Natural killer cell (primary cell): ENCODE measurements at regions of chr3 and their contacts with region 1.

Region 1: GRCh38 chr3:151838583-151839312 is 24.8 kb downstream of the AADAC start:
- DNase-seq: peak in 1 of 2 donors; percentile 67
- ATAC-seq: peak; percentile 70 to 84 (median 76)
- H3K4me3 ChIP-seq: no peak overlapping the region
- H3K4me3 Mint-ChIP-seq: no peak overlapping the region
- H3K27ac ChIP-seq: no peak overlapping the region
- H3K27ac Mint-ChIP-seq: no peak overlapping the region
- H3K4me1 ChIP-seq: peaks cover 3% of the 10 kb centered on the region
- H3K4me1 Mint-ChIP-seq: no peaks in the 10 kb centered on the region
- H3K27me3 ChIP-seq: no peaks in the 10 kb centered on the region
- H3K27me3 Mint-ChIP-seq: peaks cover 15 to 23% of the 10 kb centered on the region in 2 donors
- CTCF ChIP-seq: peak; percentile 79

Region 2: GRCh38 chr3:151156618-151157216 is 682.0 kb before region 1 on chr3:
- intact Hi-C with region 1: loop called (anchors 5 kb)
- DNase-seq: peak in 1 of 2 donors; percentile 76
- ATAC-seq: peak; percentile 69 to 78 (median 77)
- H3K4me3 ChIP-seq: no peak overlapping the region
- H3K4me3 Mint-ChIP-seq: no peak overlapping the region
- H3K27ac ChIP-seq: no peak overlapping the region
- H3K27ac Mint-ChIP-seq: no peak overlapping the region
- H3K4me1 ChIP-seq: no peaks in the 10 kb centered on the region
- H3K4me1 Mint-ChIP-seq: no peaks in the 10 kb centered on the region
- H3K27me3 ChIP-seq: no peaks in the 10 kb centered on the region
- H3K27me3 Mint-ChIP-seq: no peaks in the 10 kb centered on the region
- CTCF ChIP-seq: peak; percentile 65

Region 3: DNA sequence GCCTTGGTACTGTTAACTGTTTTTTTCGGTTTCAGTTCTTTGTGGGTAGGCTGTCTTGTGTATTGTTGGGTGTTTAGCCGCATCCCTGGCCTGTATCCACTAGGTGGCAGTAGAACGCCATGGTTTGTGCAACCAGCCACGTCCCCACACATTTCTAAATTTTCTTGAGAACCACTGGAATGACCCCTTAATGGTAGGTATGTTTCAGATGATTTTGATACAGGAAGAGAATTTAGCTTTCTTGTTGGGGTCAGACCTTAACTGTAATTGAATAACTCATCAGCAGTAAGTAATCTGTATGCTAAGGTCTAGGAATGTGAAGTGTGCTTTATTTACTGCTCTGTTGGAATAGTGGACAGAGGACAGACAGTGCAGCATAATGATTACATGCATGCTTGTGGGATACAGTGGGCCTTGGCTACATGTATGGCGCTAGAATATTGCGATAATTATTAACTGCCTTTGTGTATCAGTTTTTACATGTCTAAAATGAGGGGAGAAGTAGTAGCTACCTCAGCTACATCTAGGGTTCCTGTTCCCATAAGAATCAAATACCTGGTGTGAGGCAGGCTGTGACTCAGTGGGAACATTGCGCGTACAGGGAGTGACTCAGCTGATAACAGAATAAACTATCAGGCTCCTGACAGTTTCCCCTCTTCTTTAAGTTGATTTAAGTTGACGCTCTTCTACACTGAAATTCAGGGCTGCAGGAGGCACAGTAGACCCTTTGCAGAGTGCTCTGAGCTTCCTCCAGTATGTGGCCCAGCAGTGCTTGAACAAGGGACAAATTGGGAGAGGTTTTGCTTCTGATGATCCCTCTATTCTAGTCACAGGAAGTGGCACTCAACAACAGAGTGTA is 610.7 kb before region 1 on chr3:
- intact Hi-C with region 1: loop called (anchors 5 kb)
- DNase-seq: peak; percentile 69 to 91
- ATAC-seq: peak; percentile 80 to 88 (median 82)
- H3K4me3 ChIP-seq: no peak overlapping the region
- H3K4me3 Mint-ChIP-seq: no peak overlapping the region
- H3K27ac ChIP-seq: peak overlapping the region; percentile 6
- H3K27ac Mint-ChIP-seq: peak overlapping the region; percentile 25 to 28
- H3K4me1 ChIP-seq: peaks cover 26% of the 10 kb centered on the region
- H3K4me1 Mint-ChIP-seq: peaks cover 50 to 52% of the 10 kb centered on the region in 2 donors
- H3K27me3 ChIP-seq: no peaks in the 10 kb centered on the region
- H3K27me3 Mint-ChIP-seq: peaks cover 0 to 2% of the 10 kb centered on the region in 2 donors
- CTCF ChIP-seq: peak; percentile 94

Region 4: GRCh38 chr3:151290673-151291072 is 548.1 kb before region 1 on chr3:
- intact Hi-C with region 1: loop called (anchors 2 kb)
- DNase-seq: no peak
- ATAC-seq: no peak
- H3K4me3 ChIP-seq: no peak overlapping the region
- H3K4me3 Mint-ChIP-seq: no peak overlapping the region
- H3K27ac ChIP-seq: no peak overlapping the region
- H3K27ac Mint-ChIP-seq: no peak overlapping the region
- H3K4me1 ChIP-seq: no peaks in the 10 kb centered on the region
- H3K4me1 Mint-ChIP-seq: no peaks in the 10 kb centered on the region
- H3K27me3 ChIP-seq: no peaks in the 10 kb centered on the region
- H3K27me3 Mint-ChIP-seq: peaks cover 0 to 8% of the 10 kb centered on the region in 2 donors
- CTCF ChIP-seq: no peak

Region 5: GRCh38 chr3:151439652-151440129 is 399.1 kb before region 1 on chr3:
- intact Hi-C with region 1: loop called (anchors 1 kb)
- DNase-seq: peak in 1 of 2 donors; percentile 61
- ATAC-seq: peak; percentile 55 to 70 (median 60)
- H3K4me3 ChIP-seq: no peak overlapping the region
- H3K4me3 Mint-ChIP-seq: no peak overlapping the region
- H3K27ac ChIP-seq: no peak overlapping the region
- H3K27ac Mint-ChIP-seq: no peak overlapping the region
- H3K4me1 ChIP-seq: no peaks in the 10 kb centered on the region
- H3K4me1 Mint-ChIP-seq: no peaks in the 10 kb centered on the region
- H3K27me3 ChIP-seq: no peaks in the 10 kb centered on the region
- H3K27me3 Mint-ChIP-seq: peaks cover 0 to under 1% of the 10 kb centered on the region in 2 donors
- CTCF ChIP-seq: peak; percentile 66

Region 6: GRCh38 chr3:151468284-151468917 is 370.3 kb before region 1 on chr3:
- intact Hi-C with region 1: loop called (anchors 2 kb)
- DNase-seq: peak in 1 of 2 donors; percentile 75
- ATAC-seq: peak; percentile 50 to 80 (median 75)
- H3K4me3 ChIP-seq: no peak overlapping the region
- H3K4me3 Mint-ChIP-seq: no peak overlapping the region
- H3K27ac ChIP-seq: no peak overlapping the region
- H3K27ac Mint-ChIP-seq: no peak overlapping the region
- H3K4me1 ChIP-seq: no peaks in the 10 kb centered on the region
- H3K4me1 Mint-ChIP-seq: no peaks in the 10 kb centered on the region
- H3K27me3 ChIP-seq: no peaks in the 10 kb centered on the region
- H3K27me3 Mint-ChIP-seq: peaks cover 0 to 10% of the 10 kb centered on the region in 2 donors
- CTCF ChIP-seq: peak; percentile 86